ENCODE measurements at regions of chr10 and their contacts with region 1.

Region 1: DNA sequence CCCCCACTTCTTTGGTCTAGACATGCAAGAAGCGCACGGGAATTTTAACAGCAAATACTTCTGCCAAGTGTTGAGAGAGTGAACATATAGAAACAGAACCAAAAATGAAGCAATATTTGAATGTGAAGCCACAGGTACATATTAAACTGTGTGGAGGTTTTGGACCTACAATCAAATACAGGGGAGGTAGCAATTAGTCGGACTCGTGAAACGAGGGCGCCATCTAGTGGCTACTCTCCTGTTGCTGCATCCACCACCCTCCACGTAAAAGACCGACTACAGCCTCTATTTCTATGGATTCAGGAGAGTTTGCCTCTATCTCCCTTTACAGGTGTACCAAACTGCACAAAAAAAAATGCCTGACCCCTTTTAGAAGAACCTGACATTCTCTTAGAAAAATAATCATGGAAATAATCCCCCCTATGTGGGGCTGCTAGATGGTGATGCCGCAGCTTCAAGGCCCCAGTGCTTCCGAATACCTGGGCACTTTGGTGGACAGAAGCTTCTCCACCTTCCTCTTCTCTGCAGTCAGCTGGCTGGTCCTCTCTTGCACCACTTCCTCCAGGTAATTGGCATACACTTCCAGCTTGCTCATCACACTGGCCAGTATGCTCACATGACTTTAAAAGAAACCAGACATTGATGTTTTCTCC is 31.7 kb downstream of the TECTB start:
- DNase-seq: peak; percentile 67 to 79
- ATAC-seq: peak; percentile 80 to 90 (median 84)
- H3K4me3 ChIP-seq: no peak overlapping the region
- H3K27ac ChIP-seq: no peak overlapping the region
- H3K4me1 ChIP-seq: no peaks in the 10 kb centered on the region
- H3K27me3 ChIP-seq: peaks cover 0 to 27% (median 0%) of the 10 kb centered on the region in 7 donors
- CTCF ChIP-seq: peak; percentile 82 to 93 (median 88)

Region 2: GRCh38 chr10:111756217-111757061 is 558.5 kb before region 1 on chr10:
- intact Hi-C with region 1: loop called in 6 of 10 experiments (anchors 2 to 10 kb)
- DNase-seq: peak in 1 of 2 donors; percentile 8
- ATAC-seq: peak in 2 of 8 donors; percentile 31 to 37
- H3K4me3 ChIP-seq: no peak overlapping the region
- H3K27ac ChIP-seq: no peak overlapping the region
- H3K4me1 ChIP-seq: no peaks in the 10 kb centered on the region
- H3K27me3 ChIP-seq: peaks cover 0 to 6% (median 0%) of the 10 kb centered on the region in 7 donors
- CTCF ChIP-seq: peak in 8 of 9 donors; percentile 9 to 57 (median 48)

Region 3: GRCh38 chr10:112140110-112140970 is 174.6 kb before region 1 on chr10:
- intact Hi-C with region 1: loop called in 1 of 10 experiments (anchors 10 kb)
- DNase-seq: peak; percentile 44 to 45
- ATAC-seq: peak in 7 of 8 donors; percentile 35 to 80 (median 64)
- H3K4me3 ChIP-seq: no peak overlapping the region
- H3K27ac ChIP-seq: no peak overlapping the region
- H3K4me1 ChIP-seq: peaks cover 0 to 4% (median 0%) of the 10 kb centered on the region in 9 donors
- H3K27me3 ChIP-seq: no peaks in the 10 kb centered on the region
- CTCF ChIP-seq: peak; percentile 54 to 86 (median 77)

Region 4: GRCh38 chr10:112177247-112177646 is 137.7 kb before region 1 on chr10:
- intact Hi-C with region 1: loop called in 1 of 10 experiments (anchors 10 kb)
- DNase-seq: no peak
- ATAC-seq: peak; percentile 38 to 87 (median 75)
- H3K4me3 ChIP-seq: no peak overlapping the region
- H3K27ac ChIP-seq: peak overlapping the region in 7 of 10 donors; percentile 20 to 73 (median 56)
- H3K4me1 ChIP-seq: peaks cover 0 to 26% (median 8%) of the 10 kb centered on the region in 9 donors
- H3K27me3 ChIP-seq: no peaks in the 10 kb centered on the region
- CTCF ChIP-seq: no peak

Region 5: GRCh38 chr10:112195224-112195623 is 119.7 kb before region 1 on chr10:
- intact Hi-C with region 1: loop called in 1 of 10 experiments (anchors 5 kb)
- DNase-seq: no peak
- ATAC-seq: no peak
- H3K4me3 ChIP-seq: no peak overlapping the region
- H3K27ac ChIP-seq: no peak overlapping the region
- H3K4me1 ChIP-seq: no peaks in the 10 kb centered on the region
- H3K27me3 ChIP-seq: no peaks in the 10 kb centered on the region
- CTCF ChIP-seq: no peak

Region 6: DNA sequence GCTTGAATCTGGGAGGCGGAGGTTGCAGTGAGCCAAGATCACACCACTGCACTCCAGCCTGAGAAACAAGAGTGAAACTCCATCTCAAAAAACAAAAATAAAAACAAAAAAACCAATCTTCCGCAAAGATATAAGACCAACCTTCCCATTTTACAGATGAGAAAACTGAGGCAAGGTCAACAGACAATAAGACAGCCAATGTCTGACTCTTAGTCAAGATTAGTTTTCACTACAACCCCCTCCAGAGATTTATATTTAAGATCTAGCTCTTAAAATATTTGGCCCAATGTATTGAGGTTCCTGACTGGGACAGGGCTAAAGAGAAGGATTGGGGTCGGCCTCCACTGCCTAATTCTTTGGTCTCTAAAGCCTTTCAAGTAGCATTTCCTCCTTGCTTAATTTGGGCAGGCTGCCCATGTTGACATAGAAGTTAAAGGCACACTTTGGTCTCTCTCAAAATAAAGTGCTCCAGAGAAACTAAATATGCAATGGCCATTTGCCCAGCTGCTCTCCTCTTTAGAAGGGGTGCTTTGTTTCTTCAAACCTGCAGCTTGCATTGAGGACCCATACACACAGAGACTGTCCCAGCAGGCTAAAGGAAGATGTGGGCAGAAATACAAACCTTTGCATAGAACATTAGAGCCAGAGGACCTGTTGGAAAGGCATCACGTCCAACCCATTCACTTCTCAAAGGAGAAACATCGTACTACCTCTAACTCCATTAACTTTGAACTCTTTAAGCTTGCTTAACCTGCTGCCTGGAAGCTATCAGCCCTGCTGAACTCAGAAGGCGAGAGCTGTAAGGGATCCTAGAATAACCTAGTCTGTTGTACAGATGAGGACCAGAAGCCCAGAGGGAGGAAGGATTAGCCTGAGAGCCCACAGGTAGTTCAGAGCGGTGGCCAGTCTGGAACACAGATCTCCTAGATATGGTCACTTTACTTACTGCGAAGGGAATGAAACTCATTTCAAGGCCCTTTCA is 27.8 kb before region 1 on chr10:
- intact Hi-C with region 1: no loop called
- DNase-seq: no peak
- ATAC-seq: peak in 5 of 8 donors; percentile 33 to 69 (median 66)
- H3K4me3 ChIP-seq: no peak overlapping the region
- H3K27ac ChIP-seq: peak overlapping the region in 4 of 10 donors; percentile 14 to 69 (median 37)
- H3K4me1 ChIP-seq: peaks cover 0 to 12% (median 0%) of the 10 kb centered on the region in 9 donors
- H3K27me3 ChIP-seq: peaks cover 0 to 4% (median 0%) of the 10 kb centered on the region in 7 donors
- CTCF ChIP-seq: no peak

Region 7: DNA sequence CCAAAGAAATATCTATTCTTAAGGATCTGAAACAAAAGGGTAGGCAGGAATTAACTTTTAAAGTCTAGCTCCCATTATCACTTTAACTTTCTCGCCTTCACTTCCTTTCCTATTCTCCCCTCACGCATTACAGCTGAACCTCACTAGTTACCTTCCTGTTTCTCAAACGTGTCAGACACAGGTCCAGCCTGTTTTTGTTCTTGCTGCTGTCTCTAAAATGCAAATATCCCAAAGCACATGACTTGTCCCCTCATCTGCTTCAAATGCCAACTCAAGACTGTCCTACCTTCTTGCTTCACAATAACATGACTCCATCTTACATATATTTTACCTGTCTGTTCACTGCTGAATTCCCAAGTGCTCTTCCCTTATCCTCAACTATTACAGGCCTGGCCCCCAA is 114.2 kb after region 1 on chr10:
- intact Hi-C with region 1: loop called in 5 of 10 experiments (anchors 10 kb)
- DNase-seq: no peak
- ATAC-seq: no peak
- H3K4me3 ChIP-seq: no peak overlapping the region
- H3K27ac ChIP-seq: no peak overlapping the region
- H3K4me1 ChIP-seq: no peaks in the 10 kb centered on the region
- H3K27me3 ChIP-seq: no peaks in the 10 kb centered on the region
- CTCF ChIP-seq: no peak

Region 8: GRCh38 chr10:112434988-112435619 is 120.2 kb after region 1 on chr10:
- intact Hi-C with region 1: loop called in 5 of 10 experiments (anchors 2 to 10 kb)
- DNase-seq: no peak
- ATAC-seq: no peak
- H3K4me3 ChIP-seq: no peak overlapping the region
- H3K27ac ChIP-seq: no peak overlapping the region
- H3K4me1 ChIP-seq: no peaks in the 10 kb centered on the region
- H3K27me3 ChIP-seq: no peaks in the 10 kb centered on the region
- CTCF ChIP-seq: peak in 7 of 9 donors; percentile 38 to 68 (median 52)

Region 9: GRCh38 chr10:113273181-113274163 is 958.5 kb after region 1 on chr10:
- intact Hi-C with region 1: no loop called
- DNase-seq: peak; percentile 32 to 57
- ATAC-seq: peak; percentile 30 to 69 (median 56)
- H3K4me3 ChIP-seq: peak overlapping the region in 2 of 10 donors; percentile 8 to 14
- H3K27ac ChIP-seq: peak overlapping the region; percentile 66 to 80 (median 74)
- H3K4me1 ChIP-seq: peaks cover 3 to 24% (median 16%) of the 10 kb centered on the region in 9 donors
- H3K27me3 ChIP-seq: no peaks in the 10 kb centered on the region
- CTCF ChIP-seq: no peak